ENCODE measurements at regions of chr22 and their contacts with region 1.

Region 1: GRCh38 chr22:40436505-40437451 is 66.4 kb downstream of the SGSM3 start:
- DNase-seq: peak; percentile 38
- H3K4me3 ChIP-seq: peak overlapping the region; percentile 34
- H3K27ac ChIP-seq: peak overlapping the region; percentile 74
- H3K27me3 ChIP-seq: no peaks in the 10 kb centered on the region
- CTCF ChIP-seq: peak; percentile 54; the same call in 1 of the 2 replicates

Region 2: GRCh38 chr22:40426594-40427333 is 10.0 kb before region 1 on chr22:
- CTCF ChIA-PET with region 1: interaction called, 22 read pairs
- POLR2A ChIA-PET with region 1: interaction called, 6 read pairs
- DNase-seq: no peak
- H3K4me3 ChIP-seq: no peak overlapping the region
- H3K27ac ChIP-seq: peak overlapping the region; percentile 31
- H3K27me3 ChIP-seq: no peaks in the 10 kb centered on the region
- CTCF ChIP-seq: no peak

Region 3: GRCh38 chr22:40463017-40463631 is 26.3 kb after region 1 on chr22:
- CTCF ChIA-PET with region 1: interaction called, 11 read pairs
- POLR2A ChIA-PET with region 1: no interaction called
- DNase-seq: no peak
- H3K4me3 ChIP-seq: no peak overlapping the region
- H3K27ac ChIP-seq: no peak overlapping the region
- H3K27me3 ChIP-seq: no peaks in the 10 kb centered on the region
- CTCF ChIP-seq: no peak

Region 4: GRCh38 chr22:40509401-40510134 is 72.8 kb after region 1 on chr22:
- CTCF ChIA-PET with region 1: interaction called, 12 read pairs
- POLR2A ChIA-PET with region 1: no interaction called
- DNase-seq: peak; percentile 79
- H3K4me3 ChIP-seq: 0 out of 2 replicates have a peak overlapping the region, but pooled peaks have one; percentile 7
- H3K27ac ChIP-seq: peak overlapping the region; percentile 94
- H3K27me3 ChIP-seq: no peaks in the 10 kb centered on the region
- CTCF ChIP-seq: no peak

Region 5: DNA sequence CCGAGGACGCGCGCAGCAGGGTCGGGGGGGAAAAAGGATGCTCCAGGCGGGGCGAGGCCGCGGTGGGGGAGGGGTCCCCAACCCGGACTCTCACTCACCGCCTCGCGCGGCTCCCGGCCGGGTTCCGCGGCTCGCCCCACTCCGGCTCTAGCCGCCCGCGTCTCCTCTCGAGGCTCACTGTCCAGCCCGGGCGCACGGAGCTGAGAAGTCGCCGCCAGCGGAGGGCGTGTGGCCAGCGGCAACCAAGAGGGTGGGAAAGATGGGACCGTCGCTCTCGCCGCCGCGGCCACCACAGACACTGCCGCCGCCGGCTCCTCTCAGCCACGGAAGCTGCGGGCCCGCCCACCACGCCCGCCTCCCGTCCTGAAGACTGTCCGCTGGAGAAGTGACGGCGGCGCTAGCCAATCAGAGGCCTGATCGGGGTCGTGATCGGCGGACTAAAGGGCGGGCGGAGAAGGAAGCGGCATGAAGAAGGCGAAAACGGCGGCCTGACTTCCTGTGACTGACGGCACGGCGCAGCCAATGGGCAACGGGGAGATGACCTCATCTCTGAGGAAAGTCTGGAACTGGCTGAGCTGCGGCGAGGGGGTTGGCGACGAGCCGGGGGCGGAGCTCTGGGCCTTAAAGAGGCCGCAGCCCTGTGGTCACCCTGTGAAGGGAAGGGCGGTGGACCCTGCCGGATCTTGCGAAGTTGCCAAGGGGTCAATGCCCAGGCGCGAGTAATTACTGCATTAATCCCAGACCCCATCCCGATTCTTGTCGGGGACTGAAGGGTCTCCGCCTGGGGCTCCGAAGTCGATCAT is 199.8 kb after region 1 on chr22 and contains the start of gene MRTFA:
- CTCF ChIA-PET with region 1: interaction called, 11 read pairs
- POLR2A ChIA-PET with region 1: interaction called, 4 read pairs
- DNase-seq: peak; percentile 99
- H3K4me3 ChIP-seq: peak within 1 kb of the TSS; percentile 84
- H3K27ac ChIP-seq: peak within 1 kb of the TSS; percentile 83
- H3K27me3 ChIP-seq: no peaks in the 10 kb centered on the region
- CTCF ChIP-seq: no peak
- polyA plus RNA-seq, gene MRTFA: 6.8 and 11.6 TPM in 2 replicates

Region 6: DNA sequence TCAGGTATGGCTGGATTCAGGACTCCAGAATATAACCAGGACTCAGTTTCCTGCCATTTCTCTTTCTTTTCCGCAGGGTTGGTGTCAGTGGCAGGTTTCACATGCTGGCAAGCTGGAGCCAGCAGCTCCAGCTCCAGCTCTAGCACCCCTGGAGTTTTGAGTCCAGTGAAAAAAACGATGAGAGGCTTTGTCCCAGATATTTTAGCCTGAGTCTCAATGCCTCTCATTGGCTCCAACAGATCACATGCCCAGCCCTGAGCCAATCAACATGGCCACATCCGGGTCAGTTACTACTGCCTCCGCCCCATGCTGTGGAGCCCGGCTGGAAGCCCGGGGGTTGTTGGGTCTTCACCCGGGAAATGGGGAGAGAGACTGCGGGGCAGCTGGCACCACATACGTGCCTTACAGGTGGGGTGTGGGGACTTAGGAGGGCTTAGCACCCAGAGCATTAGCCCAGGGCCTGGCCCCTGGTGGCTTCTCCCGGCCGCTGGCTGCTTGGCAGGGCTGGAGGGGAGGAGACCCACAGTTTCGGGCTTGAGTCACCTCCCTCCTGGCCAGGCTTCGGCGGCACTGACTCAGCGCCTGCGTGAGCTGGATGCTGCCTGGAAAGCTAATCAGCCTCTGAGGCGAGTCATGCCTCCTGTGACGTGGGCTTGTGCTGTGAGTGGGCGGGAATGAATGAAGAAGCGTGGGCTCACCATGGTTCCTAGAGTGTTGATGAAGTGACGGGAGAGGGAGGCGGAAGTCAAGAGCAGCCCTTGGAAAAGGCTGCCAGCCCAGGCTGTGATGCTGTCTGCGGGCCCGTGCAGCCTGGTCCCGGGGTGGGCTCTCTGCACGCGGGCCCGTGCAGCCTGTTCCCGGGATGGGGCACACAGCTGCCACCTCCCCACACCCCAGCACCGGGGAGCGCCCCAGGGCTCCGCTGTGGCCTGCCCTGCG is 215.1 kb after region 1 on chr22:
- CTCF ChIA-PET with region 1: interaction called, 113 read pairs
- POLR2A ChIA-PET with region 1: interaction called, 3 read pairs
- DNase-seq: peak; percentile 98
- H3K4me3 ChIP-seq: peak overlapping the region; percentile 91
- H3K27ac ChIP-seq: peak overlapping the region; percentile 100
- H3K27me3 ChIP-seq: no peaks in the 10 kb centered on the region
- CTCF ChIP-seq: 0 out of 2 replicates have a peak, but pooled peaks have one; percentile 14

Region 7: GRCh38 chr22:40898850-40899357 is 462.1 kb after region 1 on chr22:
- CTCF ChIA-PET with region 1: interaction called, 16 read pairs
- POLR2A ChIA-PET with region 1: no interaction called
- DNase-seq: peak; percentile 27
- H3K4me3 ChIP-seq: no peak overlapping the region
- H3K27ac ChIP-seq: no peak overlapping the region
- H3K27me3 ChIP-seq: no peaks in the 10 kb centered on the region
- CTCF ChIP-seq: peak; percentile 67

Region 8: DNA sequence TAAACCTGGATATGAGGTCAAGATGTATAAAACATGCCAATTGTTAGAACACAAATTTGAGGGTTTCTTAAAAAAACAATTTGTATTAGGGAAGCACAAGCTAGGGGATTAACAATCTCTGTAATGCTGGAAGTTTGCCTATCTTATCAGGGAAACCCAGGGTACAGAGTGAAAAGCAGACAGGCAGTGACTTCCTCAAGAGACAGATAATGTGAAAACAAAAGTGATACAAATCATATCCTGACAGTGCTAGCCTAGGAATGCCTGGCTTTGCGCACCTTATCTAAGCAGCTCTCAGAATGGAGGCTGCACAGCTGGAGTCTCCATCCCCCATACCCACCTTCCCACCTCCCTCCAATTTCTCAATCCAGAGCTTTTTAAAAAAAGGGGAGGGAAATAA is 491.9 kb after region 1 on chr22:
- CTCF ChIA-PET with region 1: no interaction called
- POLR2A ChIA-PET with region 1: no interaction called
- DNase-seq: no peak
- H3K4me3 ChIP-seq: no peak overlapping the region
- H3K27ac ChIP-seq: no peak overlapping the region
- H3K27me3 ChIP-seq: no peaks in the 10 kb centered on the region
- CTCF ChIP-seq: no peak

Measured in AG04450 (cell line).